ENCODE measurements at regions of chr22 and their contacts with region 1.

Region 1: DNA sequence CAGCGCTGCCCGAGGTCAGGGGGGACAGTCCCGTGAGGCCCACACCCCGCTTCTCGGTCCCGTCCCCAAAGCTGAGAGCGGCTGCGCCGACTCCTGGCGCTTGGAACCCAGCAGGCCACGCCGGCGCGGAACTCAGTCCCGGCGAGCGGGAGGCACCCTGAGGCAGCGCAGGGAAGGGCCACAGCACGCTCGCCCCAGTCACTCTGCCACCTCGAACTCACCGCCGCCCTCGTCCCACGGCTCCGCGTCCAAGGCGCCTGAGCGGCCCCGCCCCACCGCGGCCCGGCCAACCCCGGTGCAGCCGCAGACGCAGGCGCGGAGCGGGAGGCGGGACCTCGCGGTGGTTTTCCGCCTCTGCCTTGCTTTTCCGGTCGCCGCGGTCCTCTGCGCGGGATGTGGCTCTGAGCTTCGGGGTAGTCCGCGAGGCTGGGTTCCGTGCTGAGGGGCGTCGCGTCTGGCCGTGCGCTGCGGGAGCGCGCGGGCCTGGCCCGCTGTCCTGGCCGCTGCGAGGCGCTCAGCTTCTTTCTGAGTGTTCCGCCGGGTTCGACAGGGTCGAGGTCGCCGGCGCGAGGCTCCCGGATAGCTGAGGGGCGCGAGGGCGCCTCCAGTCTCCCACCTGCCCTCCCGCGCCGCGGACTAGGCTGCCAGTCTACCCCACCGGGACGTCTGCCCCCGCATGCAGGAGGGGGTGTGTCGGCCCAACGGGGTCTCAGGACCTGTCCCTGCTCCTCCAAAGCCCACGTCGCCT is at the start of gene CDPF1:
- DNase-seq: peak; percentile 82 to 96 (median 91)
- ATAC-seq: peak; percentile 95
- H3K4me3 ChIP-seq: peak within 1 kb of the TSS; percentile 79
- H3K4me3 Mint-ChIP-seq: peak within 1 kb of the TSS; percentile 86
- H3K27ac ChIP-seq: peak within 1 kb of the TSS in 1 of 2 donors; percentile 65
- H3K27ac Mint-ChIP-seq: peak within 1 kb of the TSS; percentile 76
- H3K4me1 ChIP-seq: peaks cover 31% of the 10 kb centered on the region
- H3K4me1 Mint-ChIP-seq: peaks cover 32% of the 10 kb centered on the region
- H3K27me3 ChIP-seq: no peaks in the 10 kb centered on the region
- H3K27me3 Mint-ChIP-seq: no peaks in the 10 kb centered on the region
- CTCF ChIP-seq: no peak
- total RNA-seq, gene CDPF1: 1.6 to 2.6 TPM

Region 2: GRCh38 chr22:46013460-46014416 is 236.5 kb before region 1 on chr22:
- CTCF ChIA-PET with region 1: no interaction called
- POLR2A ChIA-PET with region 1: interaction called, 5 read pairs
- intact Hi-C with region 1: loop called in 1 of 2 experiments (anchors 10 kb)
- DNase-seq: peak; percentile 66 to 94 (median 84)
- ATAC-seq: peak; percentile 83
- H3K4me3 ChIP-seq: peak overlapping the region; percentile 94
- H3K4me3 Mint-ChIP-seq: peak overlapping the region; percentile 89
- H3K27ac ChIP-seq: peak overlapping the region; percentile 58 to 87
- H3K27ac Mint-ChIP-seq: peak overlapping the region; percentile 86
- H3K4me1 ChIP-seq: peaks cover 20% of the 10 kb centered on the region
- H3K4me1 Mint-ChIP-seq: peaks cover 12% of the 10 kb centered on the region
- H3K27me3 ChIP-seq: peaks cover 0 to 2% of the 10 kb centered on the region in 2 experiments
- H3K27me3 Mint-ChIP-seq: no peaks in the 10 kb centered on the region
- CTCF ChIP-seq: peak; percentile 77

Region 3: GRCh38 chr22:46122511-46122971 is 127.7 kb before region 1 on chr22:
- CTCF ChIA-PET with region 1: no interaction called
- POLR2A ChIA-PET with region 1: interaction called, 4 read pairs
- intact Hi-C with region 1: loop called in 1 of 2 experiments (anchors 5 kb)
- DNase-seq: peak; percentile 45 to 83 (median 64)
- ATAC-seq: peak; percentile 78
- H3K4me3 ChIP-seq: no peak overlapping the region
- H3K4me3 Mint-ChIP-seq: no peak overlapping the region
- H3K27ac ChIP-seq: no peak overlapping the region
- H3K27ac Mint-ChIP-seq: no peak overlapping the region
- H3K4me1 ChIP-seq: peaks cover 8% of the 10 kb centered on the region
- H3K4me1 Mint-ChIP-seq: no peaks in the 10 kb centered on the region
- H3K27me3 ChIP-seq: no peaks in the 10 kb centered on the region
- H3K27me3 Mint-ChIP-seq: no peaks in the 10 kb centered on the region
- CTCF ChIP-seq: peak; percentile 92

Region 4: DNA sequence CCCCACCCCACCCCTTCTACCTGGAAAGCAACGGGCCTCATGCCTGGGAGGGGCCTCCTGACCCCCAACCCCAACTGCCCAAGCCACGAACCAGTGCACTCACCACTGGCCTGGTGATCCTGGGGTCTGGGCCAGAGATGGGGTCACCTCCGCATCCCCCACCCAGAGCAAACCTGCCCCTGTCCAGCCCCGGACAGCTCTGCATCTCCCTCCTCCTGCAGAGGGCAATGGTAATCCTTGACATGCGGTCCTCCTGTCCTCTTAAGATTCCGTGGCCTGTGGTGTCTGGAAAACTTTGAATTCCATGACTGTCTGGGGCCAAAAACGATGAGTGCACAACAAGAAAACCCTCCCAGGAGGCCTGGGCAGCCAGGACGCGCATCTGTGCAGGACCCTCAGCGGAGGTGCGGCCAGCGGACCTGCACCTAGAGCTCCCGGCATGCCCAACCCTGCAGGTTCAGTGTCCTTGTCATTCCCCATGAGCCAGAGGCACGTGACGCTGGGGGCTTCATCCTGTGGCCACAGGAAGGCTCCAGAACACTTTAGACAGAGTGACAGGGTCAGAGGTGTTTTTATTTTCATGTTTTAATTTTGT is 116.0 kb before region 1 on chr22:
- CTCF ChIA-PET with region 1: no interaction called
- POLR2A ChIA-PET with region 1: no interaction called
- intact Hi-C with region 1: no loop called
- DNase-seq: no peak
- ATAC-seq: no peak
- H3K4me3 ChIP-seq: no peak overlapping the region
- H3K4me3 Mint-ChIP-seq: no peak overlapping the region
- H3K27ac ChIP-seq: no peak overlapping the region
- H3K27ac Mint-ChIP-seq: no peak overlapping the region
- H3K4me1 ChIP-seq: no peaks in the 10 kb centered on the region
- H3K4me1 Mint-ChIP-seq: no peaks in the 10 kb centered on the region
- H3K27me3 ChIP-seq: no peaks in the 10 kb centered on the region
- H3K27me3 Mint-ChIP-seq: no peaks in the 10 kb centered on the region
- CTCF ChIP-seq: no peak

Region 5: GRCh38 chr22:46267431-46268279 is 17.4 kb after region 1 on chr22 and contains the start of gene TTC38:
- CTCF ChIA-PET with region 1: no interaction called
- POLR2A ChIA-PET with region 1: interaction called, 15 read pairs
- intact Hi-C with region 1: loop called in 1 of 2 experiments (anchors 2 kb)
- DNase-seq: peak in 13 of 14 experiments; percentile 21 to 73 (median 43)
- ATAC-seq: peak; percentile 82
- H3K4me3 ChIP-seq: peak within 1 kb of the TSS; percentile 76
- H3K4me3 Mint-ChIP-seq: peak within 1 kb of the TSS; percentile 92
- H3K27ac ChIP-seq: no peak within 1 kb of the TSS
- H3K27ac Mint-ChIP-seq: no peak within 1 kb of the TSS
- H3K4me1 ChIP-seq: peaks cover 19% of the 10 kb centered on the region
- H3K4me1 Mint-ChIP-seq: peaks cover 20% of the 10 kb centered on the region
- H3K27me3 ChIP-seq: peaks cover 5 to 8% of the 10 kb centered on the region in 2 experiments
- H3K27me3 Mint-ChIP-seq: peaks cover 44% of the 10 kb centered on the region
- CTCF ChIP-seq: no peak
- total RNA-seq, gene TTC38: 1.8 to 2.7 TPM

Region 6: GRCh38 chr22:46296257-46297150 is 46.3 kb after region 1 on chr22 and contains the start of gene GTSE1:
- CTCF ChIA-PET with region 1: interaction called, 6 read pairs
- POLR2A ChIA-PET with region 1: interaction called, 30 read pairs
- intact Hi-C with region 1: loop called (anchors 1 to 5 kb)
- DNase-seq: peak; percentile 93 to 99 (median 97)
- ATAC-seq: peak; percentile 98
- H3K4me3 ChIP-seq: peak within 1 kb of the TSS; percentile 77
- H3K4me3 Mint-ChIP-seq: peak within 1 kb of the TSS; percentile 90
- H3K27ac ChIP-seq: peak within 1 kb of the TSS; percentile 75 to 91
- H3K27ac Mint-ChIP-seq: peak within 1 kb of the TSS; percentile 91
- H3K4me1 ChIP-seq: peaks cover 23% of the 10 kb centered on the region
- H3K4me1 Mint-ChIP-seq: peaks cover 26% of the 10 kb centered on the region
- H3K27me3 ChIP-seq: no peaks in the 10 kb centered on the region
- H3K27me3 Mint-ChIP-seq: peaks cover 4% of the 10 kb centered on the region
- CTCF ChIP-seq: peak; percentile 21
- total RNA-seq, gene GTSE1: 0.14 to 0.89 TPM

Measured in CD4-positive, alpha-beta T cell (primary cell).